Activated naive CD4-positive, alpha-beta T cell treated with anti-CD3 and anti-CD28 coated beads for 36 hours (primary cell): ENCODE measurements at regions of chr12 and their contacts with region 1.

Region 1: GRCh38 chr12:32399337-32400113 is at the start of gene FGD4:
- DNase-seq: peak; percentile 76
- H3K4me3 Mint-ChIP-seq: peak within 1 kb of the TSS; percentile 88
- H3K27ac Mint-ChIP-seq: no peak within 1 kb of the TSS
- H3K4me1 Mint-ChIP-seq: no peaks in the 10 kb centered on the region
- H3K27me3 Mint-ChIP-seq: peaks cover 38% of the 10 kb centered on the region
- total RNA-seq, gene FGD4: 0.15 to 0.17 TPM

Region 2: GRCh38 chr12:32273712-32274111 is 125.8 kb before region 1 on chr12:
- CTCF ChIA-PET with region 1: no interaction called
- intact Hi-C with region 1: loop called (anchors 5 kb)
- DNase-seq: peak; percentile 70
- H3K4me3 Mint-ChIP-seq: peak overlapping the region; percentile 58
- H3K27ac Mint-ChIP-seq: peak overlapping the region; percentile 91
- H3K4me1 Mint-ChIP-seq: peaks cover 19% of the 10 kb centered on the region
- H3K27me3 Mint-ChIP-seq: no peaks in the 10 kb centered on the region

Region 3: DNA sequence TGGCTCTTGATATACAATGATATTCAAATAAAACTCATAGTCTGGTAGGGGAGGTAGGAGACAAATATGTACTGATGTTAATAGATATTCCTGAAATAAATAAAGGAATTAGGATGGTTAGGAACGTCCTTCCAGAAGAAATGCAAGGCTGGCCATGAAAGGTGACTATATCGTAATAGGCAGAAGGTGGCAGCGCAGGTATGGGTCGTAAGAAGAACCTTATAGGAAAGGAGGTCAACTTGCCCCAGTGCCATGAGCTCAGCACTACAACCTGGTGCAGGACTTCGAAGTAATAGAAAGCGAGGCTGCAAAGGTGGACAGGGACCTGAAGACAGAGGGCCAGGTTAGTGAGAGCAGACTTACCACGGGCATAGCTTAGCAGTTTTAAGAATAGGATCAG is 55.5 kb before region 1 on chr12:
- CTCF ChIA-PET with region 1: no interaction called
- intact Hi-C with region 1: loop called (anchors 5 kb)
- DNase-seq: no peak
- H3K4me3 Mint-ChIP-seq: no peak overlapping the region
- H3K27ac Mint-ChIP-seq: no peak overlapping the region
- H3K4me1 Mint-ChIP-seq: no peaks in the 10 kb centered on the region
- H3K27me3 Mint-ChIP-seq: no peaks in the 10 kb centered on the region

Region 4: DNA sequence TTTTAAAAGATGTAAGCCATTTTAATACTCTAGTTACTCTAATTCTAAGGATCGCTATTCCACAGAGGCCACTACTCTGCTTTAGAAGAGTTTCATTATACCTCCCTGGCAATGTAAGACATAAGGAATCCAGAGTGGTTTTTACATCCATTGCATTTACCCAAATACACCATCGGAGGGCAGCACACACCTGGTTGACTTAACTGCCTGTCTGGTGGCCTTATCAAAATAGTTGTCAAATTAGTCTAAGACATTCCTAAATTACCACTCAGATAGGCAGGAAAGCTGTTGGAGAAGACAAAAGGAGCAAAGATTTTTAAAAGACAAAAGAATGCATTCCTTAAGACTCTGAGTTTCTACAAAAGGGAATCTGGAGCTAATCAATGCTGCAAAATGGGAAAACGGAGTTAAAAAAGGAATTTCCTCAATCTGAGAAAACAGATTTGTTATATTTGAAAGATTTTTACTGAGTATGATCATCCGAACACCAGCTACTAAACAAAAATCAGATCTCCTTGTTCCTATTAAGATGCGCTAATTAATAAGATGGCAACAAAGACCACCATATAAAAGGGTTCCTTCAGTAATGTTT is 34.0 kb before region 1 on chr12:
- CTCF ChIA-PET with region 1: no interaction called
- intact Hi-C with region 1: loop called (anchors 1 kb)
- DNase-seq: peak; percentile 69
- H3K4me3 Mint-ChIP-seq: no peak overlapping the region
- H3K27ac Mint-ChIP-seq: no peak overlapping the region
- H3K4me1 Mint-ChIP-seq: no peaks in the 10 kb centered on the region
- H3K27me3 Mint-ChIP-seq: no peaks in the 10 kb centered on the region

Region 5: GRCh38 chr12:32548691-32549281 is 149.3 kb after region 1 on chr12:
- CTCF ChIA-PET with region 1: no interaction called
- intact Hi-C with region 1: no loop called
- DNase-seq: no peak
- H3K4me3 Mint-ChIP-seq: no peak overlapping the region
- H3K27ac Mint-ChIP-seq: no peak overlapping the region
- H3K4me1 Mint-ChIP-seq: no peaks in the 10 kb centered on the region
- H3K27me3 Mint-ChIP-seq: no peaks in the 10 kb centered on the region